ENCODE measurements at regions of chr2 and their contacts with region 1.

Region 1: DNA sequence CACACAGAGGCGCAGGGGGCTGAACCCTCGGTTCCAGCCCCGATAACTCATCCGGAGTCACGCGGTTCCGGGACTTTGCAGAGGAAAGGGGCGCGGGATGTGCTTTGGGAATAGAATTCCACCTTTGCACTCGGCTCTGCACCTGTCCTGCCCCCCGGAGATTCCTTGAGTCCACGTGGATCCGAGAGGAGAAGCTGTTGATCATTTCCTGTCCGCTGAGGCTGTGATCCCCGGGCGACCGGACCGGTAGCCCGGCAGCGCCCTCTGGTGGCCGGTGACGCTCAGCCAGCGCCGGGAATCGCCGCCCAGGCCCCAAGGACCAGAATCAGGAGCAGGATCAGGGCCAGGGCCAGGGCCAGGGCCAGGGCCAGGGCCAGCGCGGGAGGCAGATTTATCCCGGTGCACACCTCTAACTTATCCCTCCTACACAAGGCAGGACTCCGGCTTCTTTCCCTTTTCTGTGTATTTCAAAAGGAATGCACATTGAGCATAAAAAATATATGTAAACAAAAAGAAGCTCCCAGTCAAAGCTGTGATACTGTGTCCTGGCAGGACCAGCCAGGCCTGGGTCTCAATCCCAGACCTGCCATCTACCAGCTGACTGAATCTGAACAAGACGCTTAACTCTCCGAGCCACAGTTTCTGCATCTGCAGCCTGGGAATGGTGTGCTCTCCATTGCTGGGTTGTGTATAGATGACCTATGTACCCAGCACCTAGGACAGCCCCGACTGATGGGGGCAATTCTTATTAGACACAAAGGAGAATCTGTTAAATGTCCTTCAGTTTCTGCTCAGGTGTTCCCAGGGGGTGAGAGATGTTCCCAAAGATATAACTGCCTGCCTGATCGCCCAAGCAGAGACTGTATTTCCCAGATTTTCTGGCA is 8.5 kb upstream of the SPATA3 start:
- DNase-seq: peak; percentile 82
- ATAC-seq: peak; percentile 72
- H3K4me3 Mint-ChIP-seq: peak overlapping the region; percentile 67
- H3K27ac Mint-ChIP-seq: peak overlapping the region; percentile 61
- H3K4me1 Mint-ChIP-seq: peaks cover 47% of the 10 kb centered on the region
- H3K27me3 Mint-ChIP-seq: peaks cover 17% of the 10 kb centered on the region

Region 2: DNA sequence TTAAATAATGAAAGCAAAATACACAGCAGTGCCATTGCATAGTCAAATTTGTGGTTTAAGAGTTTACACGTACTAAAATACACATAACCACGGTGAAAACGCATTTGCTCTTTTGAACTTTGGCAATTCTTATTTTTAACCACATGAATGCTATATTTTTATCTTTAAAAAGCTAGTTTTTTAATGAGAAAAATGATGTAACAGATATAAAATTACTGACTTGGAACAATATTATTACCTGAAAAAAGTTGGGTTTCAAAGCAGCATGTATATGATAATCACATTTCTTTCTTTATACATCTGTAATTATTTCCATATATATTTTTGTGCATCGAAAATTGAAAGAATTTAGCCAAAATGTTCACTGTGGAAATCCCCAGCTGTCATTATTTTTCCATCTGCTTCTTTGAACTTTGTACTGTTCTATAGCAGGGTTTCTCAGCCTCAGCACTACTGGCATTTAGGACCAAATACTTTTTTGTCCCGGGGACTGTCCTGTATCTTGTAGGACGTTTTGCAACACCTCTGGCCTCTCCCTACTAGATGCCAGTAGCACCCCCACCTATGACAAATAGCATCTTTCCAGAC is 350.6 kb before region 1 on chr2:
- CTCF ChIA-PET with region 1: no interaction called
- POLR2A ChIA-PET with region 1: no interaction called
- DNase-seq: no peak
- ATAC-seq: peak; percentile 58
- H3K4me3 Mint-ChIP-seq: no peak overlapping the region
- H3K27ac Mint-ChIP-seq: no peak overlapping the region
- H3K4me1 Mint-ChIP-seq: peaks cover 10% of the 10 kb centered on the region
- H3K27me3 Mint-ChIP-seq: no peaks in the 10 kb centered on the region

Region 3: GRCh38 chr2:230842473-230842872 is 144.9 kb before region 1 on chr2:
- CTCF ChIA-PET with region 1: interaction called, 23 read pairs
- POLR2A ChIA-PET with region 1: interaction called, 3 read pairs
- DNase-seq: no peak
- ATAC-seq: no peak
- H3K4me3 Mint-ChIP-seq: no peak overlapping the region
- H3K27ac Mint-ChIP-seq: no peak overlapping the region
- H3K4me1 Mint-ChIP-seq: peaks cover 3% of the 10 kb centered on the region
- H3K27me3 Mint-ChIP-seq: peaks cover 22% of the 10 kb centered on the region

Region 4: GRCh38 chr2:230893841-230894781 is 93.3 kb before region 1 on chr2:
- CTCF ChIA-PET with region 1: interaction called, 354 read pairs
- POLR2A ChIA-PET with region 1: interaction called, 3 read pairs
- DNase-seq: peak; percentile 34
- ATAC-seq: peak; percentile 47
- H3K4me3 Mint-ChIP-seq: no peak overlapping the region
- H3K27ac Mint-ChIP-seq: peak overlapping the region; percentile 2
- H3K4me1 Mint-ChIP-seq: peaks cover 40% of the 10 kb centered on the region
- H3K27me3 Mint-ChIP-seq: peaks cover 2% of the 10 kb centered on the region

Region 5: GRCh38 chr2:230913406-230914143 is 73.8 kb before region 1 on chr2:
- CTCF ChIA-PET with region 1: interaction called, 354 read pairs
- POLR2A ChIA-PET with region 1: no interaction called
- DNase-seq: no peak
- ATAC-seq: no peak
- H3K4me3 Mint-ChIP-seq: no peak overlapping the region
- H3K27ac Mint-ChIP-seq: no peak overlapping the region
- H3K4me1 Mint-ChIP-seq: peaks cover 47% of the 10 kb centered on the region
- H3K27me3 Mint-ChIP-seq: no peaks in the 10 kb centered on the region

Region 6: DNA sequence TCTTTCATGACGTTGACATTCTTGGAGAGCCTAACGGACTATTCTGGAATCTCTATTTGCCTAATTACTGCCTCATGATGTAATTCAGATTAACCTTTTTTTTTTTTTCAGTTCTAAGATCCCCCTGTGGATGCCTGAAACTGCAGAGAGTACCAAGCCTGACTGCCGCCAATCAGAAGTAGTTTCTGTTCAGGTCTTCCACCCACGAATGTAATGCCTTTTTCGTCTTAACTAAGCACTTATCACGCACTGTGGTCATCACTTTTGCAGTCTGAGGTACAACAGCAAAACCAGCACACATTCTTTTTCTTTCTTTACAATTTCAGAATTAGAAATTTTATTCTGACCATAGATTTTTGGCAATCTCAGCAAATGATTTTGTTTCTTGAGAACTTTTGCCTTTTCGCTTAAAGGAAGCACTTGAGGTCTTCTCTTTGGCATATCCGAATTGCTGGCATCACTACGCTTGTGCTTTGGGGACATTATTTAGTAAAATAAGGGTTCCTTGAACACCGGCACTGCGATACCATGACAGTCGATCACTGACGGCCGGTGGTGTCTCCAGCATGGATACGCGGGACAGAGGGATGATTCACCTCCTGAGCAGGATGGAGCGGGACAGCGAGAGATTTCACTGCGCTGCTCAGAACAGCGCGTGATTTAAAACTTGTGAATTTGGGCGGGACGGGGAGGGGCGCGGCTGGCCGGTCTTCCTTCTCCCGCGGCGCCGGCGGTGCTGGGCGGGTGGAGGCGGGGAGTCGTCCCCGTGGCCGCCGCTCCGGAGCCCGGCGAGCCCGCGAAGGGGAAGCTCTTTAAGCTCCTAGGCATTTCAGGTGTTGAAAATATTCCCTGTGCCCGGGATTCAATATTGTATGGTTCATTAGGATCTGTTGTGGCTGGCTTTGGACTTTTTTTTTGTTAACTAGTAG is 30.3 kb before region 1 on chr2:
- CTCF ChIA-PET with region 1: interaction called, 12 read pairs
- POLR2A ChIA-PET with region 1: interaction called, 5 read pairs
- DNase-seq: peak; percentile 72
- ATAC-seq: peak; percentile 87
- H3K4me3 Mint-ChIP-seq: peak overlapping the region; percentile 83
- H3K27ac Mint-ChIP-seq: peak overlapping the region; percentile 96
- H3K4me1 Mint-ChIP-seq: peaks cover 55% of the 10 kb centered on the region
- H3K27me3 Mint-ChIP-seq: no peaks in the 10 kb centered on the region

Region 7: DNA sequence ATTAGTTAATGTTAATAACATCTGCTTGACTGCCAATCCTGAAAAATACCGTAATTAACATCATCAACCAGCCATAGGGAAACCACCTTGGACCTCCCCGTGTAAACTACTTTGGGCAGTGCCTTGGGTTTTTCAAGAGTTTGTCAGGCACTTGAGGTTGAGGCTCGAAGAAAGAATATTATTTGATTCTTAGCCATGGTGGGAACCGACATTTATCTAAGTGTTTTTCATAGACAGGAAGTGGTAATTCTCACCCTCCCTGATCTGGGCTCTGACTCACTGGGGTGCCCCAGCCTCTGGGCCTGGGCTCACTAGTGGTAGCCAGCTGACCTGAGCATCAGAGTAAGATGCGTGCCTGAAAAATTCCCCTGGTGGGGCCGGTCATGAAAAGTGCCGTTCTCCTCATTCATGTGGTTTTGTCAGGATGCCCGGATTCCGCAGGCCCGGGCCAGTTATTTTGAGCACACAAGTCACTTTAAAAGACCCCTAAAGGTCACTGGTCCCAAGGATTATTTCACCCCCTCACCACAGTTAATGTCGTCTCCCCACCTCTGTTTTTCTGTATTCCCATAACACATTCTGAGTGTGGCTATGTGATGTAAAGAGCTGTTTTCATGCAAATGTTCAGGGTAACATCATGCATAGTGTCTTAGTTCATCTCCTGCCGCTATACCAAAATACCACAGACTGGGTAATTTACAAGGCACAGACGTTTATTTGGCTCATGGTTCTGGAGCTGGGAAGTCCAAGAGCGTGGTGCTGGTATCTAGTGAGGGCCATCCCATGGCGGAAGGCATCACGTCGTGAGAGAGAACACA is 13.1 kb before region 1 on chr2:
- CTCF ChIA-PET with region 1: interaction called, 55 read pairs
- POLR2A ChIA-PET with region 1: interaction called, 20 read pairs
- DNase-seq: peak; percentile 82
- ATAC-seq: peak; percentile 95
- H3K4me3 Mint-ChIP-seq: peak overlapping the region; percentile 51
- H3K27ac Mint-ChIP-seq: peak overlapping the region; percentile 88
- H3K4me1 Mint-ChIP-seq: peaks cover 74% of the 10 kb centered on the region
- H3K27me3 Mint-ChIP-seq: no peaks in the 10 kb centered on the region

Region 8: GRCh38 chr2:231052494-231053451 is 65.4 kb after region 1 on chr2:
- CTCF ChIA-PET with region 1: interaction called, 16 read pairs
- POLR2A ChIA-PET with region 1: no interaction called
- DNase-seq: peak; percentile 88
- ATAC-seq: peak; percentile 78
- H3K4me3 Mint-ChIP-seq: peak overlapping the region; percentile 84
- H3K27ac Mint-ChIP-seq: peak overlapping the region; percentile 15
- H3K4me1 Mint-ChIP-seq: peaks cover 46% of the 10 kb centered on the region
- H3K27me3 Mint-ChIP-seq: peaks cover 22% of the 10 kb centered on the region

Region 9: DNA sequence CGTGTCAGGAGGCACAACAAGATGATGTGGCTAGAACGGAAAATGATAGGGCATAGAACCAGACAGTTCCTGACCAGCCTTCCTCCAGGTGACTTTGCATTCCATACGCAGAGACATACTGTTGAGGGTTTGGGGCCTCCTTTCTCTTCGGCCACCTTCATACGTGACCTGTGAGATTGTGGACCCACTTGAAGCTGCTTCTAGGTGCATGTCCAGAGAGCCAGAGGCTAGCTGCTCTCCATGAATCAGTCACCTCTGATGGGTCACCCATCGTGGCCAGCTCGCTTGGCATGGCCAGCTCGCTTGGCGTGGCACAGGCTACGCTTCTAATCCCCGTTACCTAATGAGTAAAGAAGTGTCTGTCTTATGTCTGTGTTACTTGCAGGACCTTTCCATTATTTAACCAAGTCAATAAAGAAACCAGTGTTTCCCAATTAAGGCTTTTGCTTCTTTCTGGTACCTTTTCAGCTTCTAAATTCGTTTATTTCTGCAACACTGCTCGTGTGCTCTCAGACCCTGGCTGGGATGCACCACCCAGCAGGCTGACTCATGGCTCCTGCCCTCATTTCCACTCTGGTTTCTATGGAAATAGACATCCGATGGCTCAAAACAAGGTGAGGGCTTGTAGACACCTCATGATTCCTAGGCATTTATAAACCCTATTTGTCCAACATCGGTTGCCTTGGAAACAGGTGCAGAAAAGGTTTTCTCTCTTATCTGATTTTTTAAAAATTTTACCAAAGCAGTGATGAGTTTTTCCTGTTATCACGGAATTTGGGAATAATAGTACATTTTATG is 321.5 kb after region 1 on chr2:
- CTCF ChIA-PET with region 1: no interaction called
- POLR2A ChIA-PET with region 1: no interaction called
- DNase-seq: no peak
- ATAC-seq: no peak
- H3K4me3 Mint-ChIP-seq: no peak overlapping the region
- H3K27ac Mint-ChIP-seq: no peak overlapping the region
- H3K4me1 Mint-ChIP-seq: no peaks in the 10 kb centered on the region
- H3K27me3 Mint-ChIP-seq: peaks cover 10% of the 10 kb centered on the region

Region 10: DNA sequence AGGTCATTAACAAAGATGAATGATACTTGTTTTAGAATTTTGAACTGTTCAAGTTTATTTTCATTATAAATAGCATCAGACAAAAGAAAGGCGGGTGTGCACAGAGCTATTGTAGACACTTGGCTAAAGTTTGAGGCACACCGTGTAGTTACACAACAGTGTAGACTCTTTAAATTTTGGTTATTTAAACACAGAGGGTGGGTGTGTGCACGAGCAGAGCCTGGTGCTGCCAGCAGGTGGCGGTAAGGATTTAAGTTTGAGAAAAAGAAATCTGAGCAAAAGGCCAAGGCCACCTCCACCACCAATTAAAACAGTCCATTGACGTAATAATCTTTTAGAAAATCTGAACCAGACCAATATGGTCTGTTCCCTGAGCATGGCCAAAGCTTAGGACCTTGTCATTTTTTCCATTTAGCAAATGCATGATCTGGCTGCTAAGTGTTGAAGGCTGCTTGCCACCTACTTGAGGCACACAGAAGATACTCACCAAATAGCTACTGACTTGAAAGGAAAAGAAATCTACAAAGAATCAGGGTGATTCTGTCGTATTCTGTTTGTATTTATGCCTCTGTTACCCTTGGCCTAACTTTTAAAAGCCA is 813.2 kb after region 1 on chr2:
- CTCF ChIA-PET with region 1: no interaction called
- POLR2A ChIA-PET with region 1: no interaction called
- DNase-seq: peak; percentile 68
- ATAC-seq: peak; percentile 80
- H3K4me3 Mint-ChIP-seq: no peak overlapping the region
- H3K27ac Mint-ChIP-seq: no peak overlapping the region
- H3K4me1 Mint-ChIP-seq: no peaks in the 10 kb centered on the region
- H3K27me3 Mint-ChIP-seq: no peaks in the 10 kb centered on the region